ENCODE measurements at regions of chr9 and their contacts with region 1.

Region 1: DNA sequence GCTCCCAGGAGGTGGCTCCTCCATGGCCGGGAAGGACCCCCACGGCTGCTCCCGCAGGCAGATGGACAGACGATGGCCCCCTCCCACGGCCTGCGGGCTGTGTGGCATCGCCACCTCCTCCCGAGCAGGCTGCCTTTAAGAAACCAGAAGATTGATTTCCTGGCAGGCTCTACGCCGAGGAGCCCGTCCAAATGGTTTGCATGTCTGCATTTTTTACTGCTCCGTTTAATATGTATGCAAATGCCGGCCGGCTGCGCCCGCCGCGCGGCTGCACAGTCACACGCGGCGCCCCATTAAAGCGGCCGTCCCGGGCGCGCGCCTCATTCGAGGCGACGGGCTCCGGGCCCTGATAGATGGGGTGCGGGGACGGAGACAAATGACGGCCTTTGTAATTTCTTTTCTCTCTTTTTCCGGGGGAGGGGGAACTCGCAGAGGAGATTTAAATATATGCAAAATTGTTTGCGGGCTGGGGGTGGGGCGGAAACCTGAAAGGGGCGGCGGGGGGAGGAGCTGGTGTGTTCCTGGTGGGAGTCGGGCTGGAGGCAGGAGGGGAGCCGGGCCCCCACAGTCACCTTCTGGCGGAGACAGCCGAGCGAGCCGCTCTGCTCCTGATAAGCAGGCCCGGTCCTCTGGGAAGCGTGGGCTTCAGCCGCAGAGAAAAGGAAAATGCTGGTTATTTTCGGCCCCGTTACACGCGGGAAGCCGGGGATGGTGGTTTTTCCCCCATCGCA is 158.7 kb upstream of the IER5L start:
- DNase-seq: no peak
- ATAC-seq: peak; percentile 5; the same call in 1 of the 2 replicates
- H3K4me3 ChIP-seq: peak overlapping the region; percentile 25 to 29
- H3K27ac ChIP-seq: peak overlapping the region; percentile 94
- H3K4me1 ChIP-seq: peaks cover 49% of the 10 kb centered on the region
- H3K27me3 ChIP-seq: no peaks in the 10 kb centered on the region
- CTCF ChIP-seq: no peak

Region 2: DNA sequence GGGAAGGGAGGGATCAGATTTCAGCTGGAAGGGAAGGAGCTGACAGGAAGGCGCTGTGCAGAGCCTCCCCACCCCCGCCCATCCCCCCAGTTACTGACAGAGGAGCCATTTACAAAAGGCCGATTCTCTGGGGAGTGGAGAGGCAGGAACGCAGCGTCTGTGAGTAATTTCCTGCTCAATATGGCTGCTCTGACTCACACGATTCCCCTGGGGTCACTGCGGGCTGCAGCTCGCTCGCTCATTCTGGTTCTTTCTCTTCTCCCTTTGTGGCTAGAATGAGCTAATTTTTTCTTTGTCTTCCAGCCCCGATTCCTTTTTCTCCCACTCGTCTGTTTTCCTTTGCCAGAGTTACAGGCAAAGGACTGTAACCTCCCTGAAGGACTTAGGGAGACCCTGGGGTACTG is 196.8 kb before region 1 on chr9:
- CTCF ChIA-PET with region 1: no interaction called
- POLR2A ChIA-PET with region 1: interaction called, 10 read pairs
- in situ Hi-C with region 1: no loop called
- intact Hi-C with region 1: no loop called
- DNase-seq: no peak
- ATAC-seq: peak; percentile 69
- H3K4me3 ChIP-seq: peak overlapping the region; percentile 19 to 42
- H3K27ac ChIP-seq: peak overlapping the region; percentile 95
- H3K4me1 ChIP-seq: peaks cover 28% of the 10 kb centered on the region
- H3K27me3 ChIP-seq: no peaks in the 10 kb centered on the region
- CTCF ChIP-seq: no peak

Region 3: GRCh38 chr9:129166623-129167557 is 169.9 kb before region 1 on chr9:
- CTCF ChIA-PET with region 1: no interaction called
- POLR2A ChIA-PET with region 1: no interaction called
- in situ Hi-C with region 1: no loop called
- intact Hi-C with region 1: no loop called
- DNase-seq: no peak
- ATAC-seq: peak; percentile 68
- H3K4me3 ChIP-seq: 0 out of 4 replicates have a peak overlapping the region, but pooled peaks of 1 of the 2 experiments have one; percentile 26
- H3K27ac ChIP-seq: peak overlapping the region; percentile 68; the same call in 1 of the 2 replicates
- H3K4me1 ChIP-seq: peaks cover 14% of the 10 kb centered on the region
- H3K27me3 ChIP-seq: no peaks in the 10 kb centered on the region
- CTCF ChIP-seq: no peak

Region 4: GRCh38 chr9:129185991-129186390 is 150.8 kb before region 1 on chr9:
- CTCF ChIA-PET with region 1: no interaction called
- POLR2A ChIA-PET with region 1: no interaction called
- in situ Hi-C with region 1: no loop called
- intact Hi-C with region 1: no loop called
- DNase-seq: no peak
- ATAC-seq: no peak
- H3K4me3 ChIP-seq: no peak overlapping the region
- H3K27ac ChIP-seq: no peak overlapping the region
- H3K4me1 ChIP-seq: 0 out of 2 replicates have a peak, but pooled peaks cover 6% of the 10 kb centered on the region
- H3K27me3 ChIP-seq: no peaks in the 10 kb centered on the region
- CTCF ChIP-seq: no peak

Region 5: DNA sequence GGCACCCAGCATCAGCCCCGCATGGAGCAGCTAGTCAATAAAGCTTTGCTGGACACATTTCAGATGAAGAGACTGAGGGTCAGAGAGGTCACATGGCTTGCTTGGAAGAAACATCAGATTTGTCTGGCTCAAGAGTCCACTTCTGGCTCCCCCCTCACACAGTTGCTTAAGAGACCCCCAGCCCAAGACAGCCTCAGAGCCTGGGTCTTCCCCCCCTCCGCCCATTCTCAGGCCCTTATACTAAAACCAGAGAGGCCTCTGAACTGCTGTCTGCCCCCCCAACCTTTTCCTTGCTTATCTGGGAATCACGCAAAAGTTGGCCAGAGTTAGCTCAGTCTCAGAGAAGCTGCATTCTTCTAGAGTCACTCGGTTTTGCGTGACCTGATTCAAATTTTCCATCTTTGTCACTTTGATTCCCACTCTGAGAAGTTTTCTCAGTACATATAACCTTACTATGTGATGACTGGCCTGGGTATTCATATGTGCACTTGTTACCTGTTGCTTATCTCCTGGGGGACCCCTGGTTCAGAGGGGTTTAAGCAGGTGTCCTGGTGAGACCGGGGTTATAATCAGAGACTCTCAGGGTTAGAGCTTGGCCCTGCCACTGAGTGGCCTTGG is 13.3 kb before region 1 on chr9:
- CTCF ChIA-PET with region 1: no interaction called
- POLR2A ChIA-PET with region 1: interaction called, 27 read pairs
- in situ Hi-C with region 1: no loop called
- intact Hi-C with region 1: no loop called
- DNase-seq: no peak
- ATAC-seq: no peak
- H3K4me3 ChIP-seq: no peak overlapping the region
- H3K27ac ChIP-seq: no peak overlapping the region
- H3K4me1 ChIP-seq: peaks cover 4% of the 10 kb centered on the region
- H3K27me3 ChIP-seq: no peaks in the 10 kb centered on the region
- CTCF ChIP-seq: no peak

Region 6: GRCh38 chr9:129413537-129414376 is 77.0 kb after region 1 on chr9:
- CTCF ChIA-PET with region 1: no interaction called
- POLR2A ChIA-PET with region 1: no interaction called
- in situ Hi-C with region 1: no loop called
- intact Hi-C with region 1: no loop called
- DNase-seq: peak; percentile 32
- ATAC-seq: peak; percentile 87
- H3K4me3 ChIP-seq: peak overlapping the region; percentile 18 to 30; a peak in 3 of 4 replicates
- H3K27ac ChIP-seq: peak overlapping the region; percentile 95
- H3K4me1 ChIP-seq: peaks cover 39% of the 10 kb centered on the region
- H3K27me3 ChIP-seq: no peaks in the 10 kb centered on the region
- CTCF ChIP-seq: no peak

Region 7: GRCh38 chr9:129591916-129592315 is 255.2 kb after region 1 on chr9:
- CTCF ChIA-PET with region 1: interaction called, 13 read pairs
- POLR2A ChIA-PET with region 1: no interaction called
- in situ Hi-C with region 1: no loop called
- intact Hi-C with region 1: no loop called
- DNase-seq: no peak
- ATAC-seq: no peak
- H3K4me3 ChIP-seq: no peak overlapping the region
- H3K27ac ChIP-seq: no peak overlapping the region
- H3K4me1 ChIP-seq: peaks cover 3% of the 10 kb centered on the region; the same call in 1 of the 2 replicates
- H3K27me3 ChIP-seq: no peaks in the 10 kb centered on the region
- CTCF ChIP-seq: no peak